Activated T-helper 1 cell treated with anti-CD3 and anti-CD28 coated beads, Interleukin-12 subunit alpha, Interleukin-12 subunit beta, Interleukin-2, Interleukin-4 antibody, amounts not matched to agents 30 ng/mL and 10 ng/mL and 1 ng/mL, durations not matched to agents 14 hours and 24 hours and 36 hours (primary cell): ENCODE measurements at regions of chr2 and their contacts with region 1.

Region 1: GRCh38 chr2:190736355-190736754 is 87.5 kb downstream of the NAB1 start:
- DNase-seq: no peak
- H3K4me3 Mint-ChIP-seq: no peak overlapping the region
- H3K27ac Mint-ChIP-seq: no peak overlapping the region
- H3K4me1 Mint-ChIP-seq: no peaks in the 10 kb centered on the region
- H3K27me3 Mint-ChIP-seq: peaks cover 2% of the 10 kb centered on the region

Region 2: DNA sequence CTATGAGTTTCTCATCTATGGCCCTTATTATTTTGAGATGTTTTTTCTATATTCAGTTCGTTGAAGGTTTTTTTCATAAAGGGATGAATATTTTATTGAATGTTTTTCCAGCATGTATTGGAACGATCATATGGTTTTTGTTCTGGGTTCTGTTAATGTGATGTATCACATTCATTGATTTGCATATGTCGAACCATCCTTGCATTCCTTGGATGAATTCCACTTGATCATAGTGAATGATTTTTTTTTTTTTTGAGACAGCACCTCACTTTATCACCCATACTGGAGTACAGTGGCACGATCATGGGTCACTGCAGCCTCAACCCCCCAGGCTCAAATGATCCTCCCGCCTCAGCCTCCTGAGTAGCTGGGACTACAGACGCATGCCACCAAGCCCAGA is 196.3 kb before region 1 on chr2:
- intact Hi-C with region 1: no loop called
- DNase-seq: no peak
- H3K4me3 Mint-ChIP-seq: no peak overlapping the region
- H3K27ac Mint-ChIP-seq: no peak overlapping the region
- H3K4me1 Mint-ChIP-seq: peaks cover 15% of the 10 kb centered on the region
- H3K27me3 Mint-ChIP-seq: no peaks in the 10 kb centered on the region

Region 3: DNA sequence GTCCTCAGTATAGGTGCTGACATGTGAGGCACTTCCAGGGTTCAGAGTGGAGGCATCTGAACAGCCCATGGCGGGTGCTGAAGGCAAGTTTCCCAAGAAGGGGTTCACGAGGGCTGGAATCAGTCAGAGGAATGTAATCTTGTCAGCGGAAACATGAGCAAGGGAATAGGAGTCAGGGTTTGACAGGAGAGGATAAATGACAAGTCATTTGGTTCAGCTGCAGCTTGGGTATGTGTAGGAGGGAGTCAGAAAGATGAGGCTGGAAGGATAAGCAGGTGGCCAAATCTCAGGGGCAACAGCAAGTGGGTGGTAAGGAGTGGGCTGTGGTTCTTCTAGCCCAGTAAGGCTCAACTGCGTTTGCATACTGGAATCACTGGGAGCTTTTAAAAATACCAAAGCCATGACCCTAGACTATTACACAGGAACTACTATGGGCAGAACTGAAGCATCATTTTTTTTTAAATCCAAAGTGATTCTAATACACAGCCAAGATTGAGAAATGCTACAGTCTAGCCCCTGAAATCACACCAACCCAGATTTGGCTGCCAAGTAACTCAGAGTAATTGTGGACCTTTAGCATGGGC is 129.2 kb before region 1 on chr2:
- intact Hi-C with region 1: no loop called
- DNase-seq: no peak
- H3K4me3 Mint-ChIP-seq: no peak overlapping the region
- H3K27ac Mint-ChIP-seq: no peak overlapping the region
- H3K4me1 Mint-ChIP-seq: peaks cover 6% of the 10 kb centered on the region
- H3K27me3 Mint-ChIP-seq: peaks cover 7% of the 10 kb centered on the region

Region 4: GRCh38 chr2:190755772-190756415 is 19.5 kb after region 1 on chr2:
- intact Hi-C with region 1: loop called (anchors 2 kb)
- DNase-seq: no peak
- H3K4me3 Mint-ChIP-seq: no peak overlapping the region
- H3K27ac Mint-ChIP-seq: no peak overlapping the region
- H3K4me1 Mint-ChIP-seq: peaks cover 20% of the 10 kb centered on the region
- H3K27me3 Mint-ChIP-seq: no peaks in the 10 kb centered on the region

Region 5: GRCh38 chr2:190771726-190772125 is 35.4 kb after region 1 on chr2:
- intact Hi-C with region 1: loop called (anchors 2 kb)
- DNase-seq: no peak
- H3K4me3 Mint-ChIP-seq: no peak overlapping the region
- H3K27ac Mint-ChIP-seq: no peak overlapping the region
- H3K4me1 Mint-ChIP-seq: peaks cover 10% of the 10 kb centered on the region
- H3K27me3 Mint-ChIP-seq: no peaks in the 10 kb centered on the region

Region 6: DNA sequence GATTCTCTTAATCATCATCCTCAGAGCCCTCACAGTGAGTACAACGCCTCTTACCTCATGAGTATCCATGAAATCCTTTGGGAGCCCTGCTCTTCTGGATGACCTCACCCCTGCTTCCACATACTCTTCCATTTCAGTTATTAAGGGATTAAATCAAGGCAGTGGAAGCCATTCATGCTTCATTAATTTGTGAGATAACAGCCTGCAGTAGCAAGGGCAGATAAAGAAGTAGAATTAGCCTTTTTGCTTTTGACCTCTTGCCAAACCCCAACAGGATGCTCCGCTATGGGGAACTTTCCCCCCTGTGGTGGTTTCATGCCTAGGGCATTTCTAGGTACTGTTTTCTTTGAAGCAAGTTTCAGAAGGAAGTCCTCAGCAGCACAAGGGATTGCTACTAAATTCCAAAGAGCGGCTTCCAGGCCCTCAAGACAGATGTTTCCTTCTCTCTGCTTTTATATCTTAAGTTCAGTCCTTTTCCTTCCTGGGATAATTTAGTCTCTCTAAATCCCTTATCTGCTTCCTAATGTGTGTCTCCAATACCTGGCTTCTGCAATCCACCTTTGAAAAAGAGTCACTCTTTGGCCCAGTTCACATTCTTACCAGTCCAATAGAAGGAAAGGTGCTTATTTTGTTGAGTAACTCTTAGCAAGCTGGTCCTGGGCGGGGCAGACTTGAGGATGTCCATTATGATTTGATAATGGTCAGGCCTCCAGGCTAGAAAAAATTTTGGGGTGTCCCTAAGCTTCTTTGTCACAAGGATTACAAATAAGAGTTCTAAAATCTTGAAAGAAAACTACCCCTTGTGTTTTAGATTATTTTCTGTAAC is 585.7 kb after region 1 on chr2:
- intact Hi-C with region 1: no loop called
- DNase-seq: no peak
- H3K4me3 Mint-ChIP-seq: no peak overlapping the region
- H3K27ac Mint-ChIP-seq: no peak overlapping the region
- H3K4me1 Mint-ChIP-seq: peaks cover 17% of the 10 kb centered on the region
- H3K27me3 Mint-ChIP-seq: peaks cover 9% of the 10 kb centered on the region